ENCODE measurements at regions of chr1 and their contacts with region 1.

Region 1: GRCh38 chr1:205321164-205321958 is at the start of gene NUAK2:
- DNase-seq: peak; percentile 78 to 87 (median 84)
- ATAC-seq: peak; percentile 94
- H3K4me3 ChIP-seq: peak within 1 kb of the TSS; percentile 95
- H3K4me3 Mint-ChIP-seq: peak within 1 kb of the TSS; percentile 91 to 100 (median 98)
- H3K27ac ChIP-seq: peak within 1 kb of the TSS; percentile 89
- H3K27ac Mint-ChIP-seq: peak within 1 kb of the TSS; percentile 86 to 99 (median 94)
- H3K4me1 ChIP-seq: peaks cover 42 to 49% of the 10 kb centered on the region in 2 donors
- H3K4me1 Mint-ChIP-seq: peaks cover 42 to 69% (median 64%) of the 10 kb centered on the region in 7 donors
- H3K27me3 ChIP-seq: no peaks in the 10 kb centered on the region
- H3K27me3 Mint-ChIP-seq: peaks cover 0 to 21% (median 0%) of the 10 kb centered on the region in 5 donors
- total RNA-seq, gene NUAK2: 9.1 to 57.8 (median 23.0) TPM

Region 2: DNA sequence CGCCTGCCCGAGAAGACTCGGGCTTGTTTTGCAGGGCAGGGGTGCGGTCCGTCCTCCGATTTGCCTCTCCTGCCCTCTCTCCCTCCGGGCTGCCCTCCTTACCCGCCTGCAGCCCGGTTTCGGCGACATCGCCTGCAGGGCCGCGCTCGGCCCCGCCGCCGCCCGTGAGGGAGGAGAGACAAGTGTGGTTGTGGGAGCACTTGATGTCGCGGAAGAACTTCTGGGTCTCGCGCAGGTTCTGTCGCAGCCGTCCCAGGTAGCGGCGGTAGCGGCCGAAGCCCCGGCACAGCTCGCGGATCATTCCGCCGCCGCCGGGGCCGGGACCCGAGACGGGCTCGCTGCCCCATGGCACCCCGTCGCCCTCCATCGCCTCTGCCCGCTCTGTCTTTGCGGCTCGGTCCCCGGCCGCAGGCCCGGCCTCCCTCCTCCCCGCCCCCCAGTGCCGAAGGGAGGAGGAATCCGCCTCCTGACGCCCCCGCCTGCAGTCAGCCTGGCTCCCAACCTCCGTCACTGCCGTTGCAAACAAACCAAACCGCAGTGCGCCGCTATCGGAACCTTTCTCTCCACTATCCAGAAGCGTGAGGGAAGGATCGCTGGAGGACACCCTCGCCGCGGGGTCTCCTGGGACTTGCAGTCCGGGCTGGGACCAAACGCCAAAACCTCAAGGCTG is 110.1 kb before region 1 on chr1 and contains the start of gene DSTYK:
- CTCF ChIA-PET with region 1: no interaction called
- POLR2A ChIA-PET with region 1: interaction called, 4 read pairs
- intact Hi-C with region 1: loop called in 1 of 2 experiments (anchors 1 kb)
- DNase-seq: peak; percentile 77 to 95 (median 93)
- ATAC-seq: peak; percentile 95
- H3K4me3 ChIP-seq: peak within 1 kb of the TSS; percentile 75
- H3K4me3 Mint-ChIP-seq: peak within 1 kb of the TSS; percentile 89 to 98 (median 96)
- H3K27ac ChIP-seq: peak within 1 kb of the TSS; percentile 87
- H3K27ac Mint-ChIP-seq: peak within 1 kb of the TSS; percentile 95 to 99 (median 98)
- H3K4me1 ChIP-seq: peaks cover 8% of the 10 kb centered on the region in 2 donors
- H3K4me1 Mint-ChIP-seq: peaks cover 12 to 66% (median 54%) of the 10 kb centered on the region in 7 donors
- H3K27me3 ChIP-seq: no peaks in the 10 kb centered on the region
- H3K27me3 Mint-ChIP-seq: peaks cover 0 to 4% (median 0%) of the 10 kb centered on the region in 5 donors
- total RNA-seq, gene DSTYK: 11.3 to 18.5 (median 15.2) TPM

Region 3: DNA sequence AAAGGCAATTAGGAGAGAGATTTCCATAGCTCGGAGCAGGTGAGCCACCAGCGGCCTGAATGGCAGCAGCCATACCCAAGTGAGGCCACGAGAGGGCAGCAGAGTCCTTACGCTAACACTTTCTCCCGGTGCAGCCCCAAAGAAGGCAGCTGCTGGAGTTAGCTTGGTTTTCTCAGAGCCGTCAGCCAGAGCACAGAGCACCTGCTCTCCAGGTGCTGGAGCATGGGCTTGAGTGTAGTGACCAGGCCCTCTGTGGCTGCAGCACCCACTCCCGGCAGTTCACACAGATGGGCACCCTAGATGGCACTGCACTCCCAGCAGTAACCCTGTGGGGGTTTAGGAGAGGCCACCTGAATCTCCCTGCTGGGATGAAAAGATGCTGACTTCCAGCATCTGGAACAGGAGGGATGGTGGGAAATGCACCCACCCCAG is 47.8 kb before region 1 on chr1:
- CTCF ChIA-PET with region 1: interaction called, 955 read pairs
- POLR2A ChIA-PET with region 1: interaction called, 1,119 read pairs
- intact Hi-C with region 1: loop called (anchors 1 kb)
- DNase-seq: peak; percentile 77 to 87 (median 80)
- ATAC-seq: peak; percentile 93
- H3K4me3 ChIP-seq: peak overlapping the region; percentile 35
- H3K4me3 Mint-ChIP-seq: peak overlapping the region in 9 of 10 donors; percentile 60 to 77 (median 73)
- H3K27ac ChIP-seq: no peak overlapping the region
- H3K27ac Mint-ChIP-seq: peak overlapping the region in 8 of 9 donors; percentile 70 to 93 (median 80)
- H3K4me1 ChIP-seq: peaks cover 22 to 42% of the 10 kb centered on the region in 2 donors
- H3K4me1 Mint-ChIP-seq: peaks cover 16 to 48% (median 36%) of the 10 kb centered on the region in 7 donors
- H3K27me3 ChIP-seq: no peaks in the 10 kb centered on the region
- H3K27me3 Mint-ChIP-seq: peaks cover 0 to under 1% (median 0%) of the 10 kb centered on the region in 5 donors

Region 4: DNA sequence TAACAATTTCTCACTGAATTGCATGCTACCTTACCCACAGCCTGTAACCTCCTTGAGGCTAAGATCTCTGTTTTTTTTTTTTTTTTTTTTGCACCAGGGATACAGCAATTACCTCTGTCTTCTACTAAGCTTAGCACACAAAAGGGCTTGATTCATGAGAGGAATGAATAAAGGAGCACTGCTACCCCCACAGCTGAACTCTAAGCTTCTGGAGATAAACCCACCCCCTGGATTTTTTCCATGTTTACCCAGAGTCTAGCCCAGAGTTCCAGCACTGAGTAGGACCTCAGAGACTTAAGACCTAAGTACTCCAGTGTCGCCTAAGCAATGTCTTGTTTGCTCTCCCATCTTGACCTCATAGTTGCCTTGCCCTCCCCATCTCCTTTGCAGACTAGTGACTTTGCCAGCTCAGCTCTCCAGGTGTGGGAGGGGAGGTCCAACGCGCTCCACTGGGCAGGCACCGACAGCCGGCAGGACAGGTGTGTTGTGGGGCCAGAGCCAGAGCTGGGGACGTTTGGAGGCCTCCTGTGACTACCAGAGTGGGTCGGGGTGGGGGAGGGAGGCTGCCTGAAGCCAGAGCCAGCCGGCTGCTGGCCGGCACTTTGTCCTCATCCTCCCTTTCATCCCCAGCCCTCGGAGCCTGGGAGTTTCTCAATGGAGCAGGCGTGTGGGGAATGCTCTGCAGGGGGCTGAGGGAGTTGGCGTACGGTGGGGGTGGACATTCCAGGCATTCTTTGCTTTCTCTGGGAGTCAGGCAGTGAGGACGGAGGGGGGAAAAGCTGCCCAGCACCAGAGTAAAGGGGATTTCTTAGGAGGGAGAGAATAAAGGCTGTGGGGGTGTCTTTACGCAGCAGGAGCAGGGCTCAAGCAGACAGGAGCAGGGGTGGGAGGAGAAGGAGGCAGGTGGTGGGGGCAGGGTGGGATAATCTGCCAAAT is 20.2 kb before region 1 on chr1:
- CTCF ChIA-PET with region 1: interaction called, 4 read pairs
- POLR2A ChIA-PET with region 1: interaction called, 16 read pairs
- intact Hi-C with region 1: no loop called
- DNase-seq: no peak
- ATAC-seq: no peak
- H3K4me3 ChIP-seq: no peak overlapping the region
- H3K4me3 Mint-ChIP-seq: no peak overlapping the region
- H3K27ac ChIP-seq: no peak overlapping the region
- H3K27ac Mint-ChIP-seq: peak overlapping the region in 8 of 9 donors; percentile 25 to 84 (median 75)
- H3K4me1 ChIP-seq: peaks cover 3 to 7% of the 10 kb centered on the region in 2 donors
- H3K4me1 Mint-ChIP-seq: peaks cover 30 to 73% (median 57%) of the 10 kb centered on the region in 7 donors
- H3K27me3 ChIP-seq: no peaks in the 10 kb centered on the region
- H3K27me3 Mint-ChIP-seq: peaks cover 0 to 2% (median 0%) of the 10 kb centered on the region in 5 donors

Region 5: GRCh38 chr1:205354259-205354904 is 33.0 kb after region 1 on chr1:
- CTCF ChIA-PET with region 1: interaction called, 23 read pairs
- POLR2A ChIA-PET with region 1: no interaction called
- intact Hi-C with region 1: no loop called
- DNase-seq: peak in 8 of 9 donors; percentile 24 to 67 (median 52)
- ATAC-seq: peak; percentile 82
- H3K4me3 ChIP-seq: no peak overlapping the region
- H3K4me3 Mint-ChIP-seq: no peak overlapping the region
- H3K27ac ChIP-seq: no peak overlapping the region
- H3K27ac Mint-ChIP-seq: peak overlapping the region in 1 of 9 donors; percentile 32
- H3K4me1 ChIP-seq: no peaks in the 10 kb centered on the region
- H3K4me1 Mint-ChIP-seq: peaks cover 0 to 4% (median 0%) of the 10 kb centered on the region in 7 donors
- H3K27me3 ChIP-seq: no peaks in the 10 kb centered on the region
- H3K27me3 Mint-ChIP-seq: peaks cover 16 to 37% (median 20%) of the 10 kb centered on the region in 5 donors

Region 6: DNA sequence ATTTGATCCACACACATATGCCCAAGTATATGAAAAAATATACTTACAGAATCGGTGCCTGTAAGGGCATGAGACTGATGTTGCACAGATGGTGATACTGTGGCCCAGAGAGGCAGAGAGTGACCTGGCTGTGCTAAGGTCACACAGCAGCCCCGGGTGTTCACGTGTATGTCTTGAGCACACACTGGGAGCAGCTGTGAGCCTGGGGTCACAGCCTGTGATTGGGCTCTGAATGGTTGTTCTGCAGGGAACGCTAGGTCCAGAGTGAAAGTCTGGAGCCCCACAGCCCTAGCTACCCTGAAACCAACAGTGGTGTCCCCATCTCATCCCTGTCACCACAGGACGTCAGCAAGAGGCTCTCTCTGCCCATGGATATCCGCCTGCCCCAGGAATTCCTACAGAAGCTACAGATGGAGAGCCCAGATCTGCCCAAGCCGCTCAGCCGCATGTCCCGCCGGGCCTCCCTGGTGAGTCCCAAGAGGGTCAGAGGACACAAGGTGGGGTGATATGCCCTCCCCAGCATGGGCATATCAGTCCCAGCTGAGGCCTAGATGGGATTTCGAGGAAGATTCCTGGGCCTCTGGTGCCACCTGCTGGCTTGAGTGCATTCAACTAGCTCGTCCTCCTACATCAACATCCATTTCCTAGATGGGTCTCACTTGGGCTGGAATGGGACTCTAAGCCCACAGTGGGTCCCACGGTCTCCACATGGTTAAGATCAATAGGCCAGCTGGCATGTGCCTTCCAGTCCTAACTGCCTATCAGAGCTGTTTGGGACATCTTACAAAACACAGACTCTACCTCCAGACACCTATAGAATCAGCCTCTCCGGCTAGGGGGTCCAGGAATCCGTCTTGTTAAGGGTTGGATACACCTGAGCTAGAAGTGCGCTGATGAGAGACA is 202.8 kb after region 1 on chr1:
- CTCF ChIA-PET with region 1: interaction called, 14 read pairs
- POLR2A ChIA-PET with region 1: no interaction called
- intact Hi-C with region 1: no loop called
- DNase-seq: peak; percentile 42 to 69 (median 62)
- ATAC-seq: peak; percentile 60
- H3K4me3 ChIP-seq: no peak overlapping the region
- H3K4me3 Mint-ChIP-seq: no peak overlapping the region
- H3K27ac ChIP-seq: no peak overlapping the region
- H3K27ac Mint-ChIP-seq: no peak overlapping the region
- H3K4me1 ChIP-seq: no peaks in the 10 kb centered on the region
- H3K4me1 Mint-ChIP-seq: peaks cover 0 to 3% (median 0%) of the 10 kb centered on the region in 7 donors
- H3K27me3 ChIP-seq: no peaks in the 10 kb centered on the region
- H3K27me3 Mint-ChIP-seq: peaks cover 0 to 4% (median 0%) of the 10 kb centered on the region in 5 donors